Adrenal gland (tissue), 19 donors: ENCODE measurements at regions of chr1 and their contacts with region 1.

Region 1: DNA sequence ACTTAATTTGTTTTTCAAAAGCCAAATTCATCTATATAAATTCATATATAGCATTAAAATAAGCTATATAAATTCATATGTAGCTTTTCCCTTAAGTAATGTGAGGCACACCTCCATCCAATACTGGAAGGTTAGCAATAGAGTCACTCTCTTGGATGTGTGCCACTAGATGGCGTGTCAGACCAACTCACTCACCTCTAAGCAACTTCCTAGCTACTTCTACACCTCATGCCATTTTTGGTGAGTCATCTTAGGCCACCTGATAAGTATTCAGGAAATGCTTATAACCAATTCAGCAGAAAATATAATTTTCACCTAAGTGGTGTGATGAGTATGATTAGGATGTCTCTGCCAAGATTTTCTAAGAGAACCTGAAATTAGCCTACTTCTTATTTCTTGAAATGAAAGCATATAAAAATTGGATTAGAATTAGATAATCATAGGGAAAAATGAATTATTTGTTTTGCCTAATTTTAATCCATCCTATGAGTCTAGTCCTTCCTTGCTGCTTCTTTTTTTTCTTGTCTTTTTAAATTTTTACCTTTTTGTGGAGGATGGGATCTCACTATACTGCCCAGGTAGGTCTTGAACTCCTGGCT is 34.4 kb upstream of the TADA1 start:
- DNase-seq: peak; percentile 69 to 86 (median 80)
- H3K4me3 ChIP-seq: no peak overlapping the region
- H3K27ac ChIP-seq: no peak overlapping the region
- H3K4me1 ChIP-seq: no peaks in the 10 kb centered on the region
- H3K27me3 ChIP-seq: no peaks in the 10 kb centered on the region
- CTCF ChIP-seq: peak in 5 of 6 experiments; percentile 41 to 67 (median 66)
- POLR2A ChIP-seq: no peak

Region 2: GRCh38 chr1:167059045-167059808 is 148.7 kb after region 1 on chr1:
- intact Hi-C with region 1: loop called (anchors 5 kb)
- DNase-seq: peak; percentile 50 to 89 (median 73)
- H3K4me3 ChIP-seq: no peak overlapping the region
- H3K27ac ChIP-seq: no peak overlapping the region
- H3K4me1 ChIP-seq: no peaks in the 10 kb centered on the region
- H3K27me3 ChIP-seq: peaks cover 9% of the 10 kb centered on the region
- CTCF ChIP-seq: peak; percentile 78 to 97 (median 90)
- POLR2A ChIP-seq: no peak